ENCODE measurements at regions of chr15 and their contacts with region 1.

Region 1: GRCh38 chr15:101294731-101295606 is at the start of gene SNRPA1:
- DNase-seq: peak; percentile 97
- H3K4me3 Mint-ChIP-seq: peak within 1 kb of the TSS; percentile 92
- H3K27ac Mint-ChIP-seq: peak within 1 kb of the TSS; percentile 92
- H3K4me1 Mint-ChIP-seq: peaks cover 38% of the 10 kb centered on the region
- H3K27me3 Mint-ChIP-seq: no peaks in the 10 kb centered on the region
- total RNA-seq, gene SNRPA1: 205 to 212 TPM

Region 2: DNA sequence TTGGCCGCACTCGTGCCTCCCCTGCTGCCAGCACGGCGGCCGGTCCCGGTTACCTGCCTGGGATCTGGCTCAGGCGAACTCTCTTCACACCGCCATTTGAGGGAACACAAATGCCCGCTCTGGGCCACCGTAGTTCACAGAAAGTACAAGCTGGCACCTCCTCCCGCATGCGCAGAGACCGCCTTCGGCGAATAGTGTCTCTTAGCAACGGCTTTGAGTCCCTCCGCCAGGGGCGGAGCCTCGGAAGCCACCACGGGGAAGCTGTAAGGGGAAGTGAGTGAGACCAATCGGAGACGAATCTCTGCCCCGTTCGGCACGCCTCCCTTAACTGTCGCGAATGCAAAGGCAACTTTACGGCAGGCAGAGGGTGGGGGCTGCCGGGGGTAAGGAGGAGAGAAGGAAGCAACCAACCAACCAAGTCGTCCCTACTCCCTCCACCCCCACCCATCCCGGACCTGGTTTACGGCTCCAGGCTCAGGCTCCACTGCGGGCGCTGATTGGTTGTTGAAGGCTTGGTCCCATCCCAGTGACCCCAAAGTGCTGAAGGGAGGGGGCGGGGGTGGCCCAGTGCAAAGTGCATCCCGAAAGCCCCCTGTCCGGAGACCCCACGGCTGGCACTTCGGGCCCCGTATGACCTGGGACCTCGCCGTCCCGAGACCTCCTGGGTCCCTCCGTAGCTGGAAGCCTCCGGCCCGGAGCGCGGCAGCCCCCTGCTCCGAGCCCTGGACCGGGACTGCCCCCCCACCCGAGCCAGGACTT is 692.7 kb before region 1 on chr15 and contains the starts of genes ASB7 and LINS1:
- CTCF ChIA-PET with region 1: no interaction called
- intact Hi-C with region 1: loop called (anchors 5 kb)
- DNase-seq: peak; percentile 99
- H3K4me3 Mint-ChIP-seq: no peak within 1 kb of the TSS
- H3K27ac Mint-ChIP-seq: no peak within 1 kb of the TSS
- H3K4me1 Mint-ChIP-seq: peaks cover 56% of the 10 kb centered on the region
- H3K27me3 Mint-ChIP-seq: no peaks in the 10 kb centered on the region
- total RNA-seq, gene ASB7: 15.6 to 16.8 TPM
- total RNA-seq, gene LINS1: 36.8 to 37.1 TPM

Region 3: GRCh38 chr15:101277038-101277882 is 17.7 kb before region 1 on chr15 and contains the start of gene SELENOS:
- CTCF ChIA-PET with region 1: interaction called, 4 read pairs
- intact Hi-C with region 1: loop called (anchors 1 kb)
- DNase-seq: peak; percentile 85
- H3K4me3 Mint-ChIP-seq: peak within 1 kb of the TSS; percentile 90
- H3K27ac Mint-ChIP-seq: peak within 1 kb of the TSS; percentile 54
- H3K4me1 Mint-ChIP-seq: peaks cover 21% of the 10 kb centered on the region
- H3K27me3 Mint-ChIP-seq: no peaks in the 10 kb centered on the region
- total RNA-seq, gene SELENOS: 13.1 to 15.3 TPM

Region 4: DNA sequence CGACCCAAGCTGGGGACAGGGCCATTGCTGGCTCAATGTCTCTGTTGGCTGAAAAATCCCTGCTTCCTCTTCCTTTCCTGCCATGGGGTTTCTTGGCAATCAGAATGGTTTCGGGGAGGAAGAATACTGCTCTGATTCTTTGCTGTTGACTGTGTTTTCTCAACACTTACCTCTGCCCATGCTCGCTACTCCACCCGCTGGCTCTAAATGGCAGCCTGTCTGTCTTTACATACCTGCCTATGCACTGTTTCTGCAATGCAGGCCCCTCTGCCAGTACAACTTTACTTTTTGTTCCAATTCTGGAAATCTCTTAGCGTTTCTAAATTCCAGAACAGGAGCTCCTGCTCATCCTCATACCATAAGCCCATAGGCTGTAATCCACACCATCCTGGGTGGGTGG is 38.4 kb after region 1 on chr15:
- CTCF ChIA-PET with region 1: no interaction called
- intact Hi-C with region 1: loop called (anchors 1 kb)
- DNase-seq: no peak
- H3K4me3 Mint-ChIP-seq: no peak overlapping the region
- H3K27ac Mint-ChIP-seq: peak overlapping the region; percentile 27
- H3K4me1 Mint-ChIP-seq: peaks cover 11% of the 10 kb centered on the region
- H3K27me3 Mint-ChIP-seq: no peaks in the 10 kb centered on the region

Region 5: GRCh38 chr15:101514318-101514717 is 219.3 kb after region 1 on chr15:
- CTCF ChIA-PET with region 1: no interaction called
- intact Hi-C with region 1: no loop called
- DNase-seq: no peak
- H3K4me3 Mint-ChIP-seq: no peak overlapping the region
- H3K27ac Mint-ChIP-seq: no peak overlapping the region
- H3K4me1 Mint-ChIP-seq: no peaks in the 10 kb centered on the region
- H3K27me3 Mint-ChIP-seq: peaks cover 7% of the 10 kb centered on the region

Region 6: GRCh38 chr15:101528108-101528916 is 233.3 kb after region 1 on chr15:
- CTCF ChIA-PET with region 1: no interaction called
- intact Hi-C with region 1: no loop called
- DNase-seq: no peak
- H3K4me3 Mint-ChIP-seq: no peak overlapping the region
- H3K27ac Mint-ChIP-seq: no peak overlapping the region
- H3K4me1 Mint-ChIP-seq: no peaks in the 10 kb centered on the region
- H3K27me3 Mint-ChIP-seq: peaks cover 12% of the 10 kb centered on the region

Region 7: DNA sequence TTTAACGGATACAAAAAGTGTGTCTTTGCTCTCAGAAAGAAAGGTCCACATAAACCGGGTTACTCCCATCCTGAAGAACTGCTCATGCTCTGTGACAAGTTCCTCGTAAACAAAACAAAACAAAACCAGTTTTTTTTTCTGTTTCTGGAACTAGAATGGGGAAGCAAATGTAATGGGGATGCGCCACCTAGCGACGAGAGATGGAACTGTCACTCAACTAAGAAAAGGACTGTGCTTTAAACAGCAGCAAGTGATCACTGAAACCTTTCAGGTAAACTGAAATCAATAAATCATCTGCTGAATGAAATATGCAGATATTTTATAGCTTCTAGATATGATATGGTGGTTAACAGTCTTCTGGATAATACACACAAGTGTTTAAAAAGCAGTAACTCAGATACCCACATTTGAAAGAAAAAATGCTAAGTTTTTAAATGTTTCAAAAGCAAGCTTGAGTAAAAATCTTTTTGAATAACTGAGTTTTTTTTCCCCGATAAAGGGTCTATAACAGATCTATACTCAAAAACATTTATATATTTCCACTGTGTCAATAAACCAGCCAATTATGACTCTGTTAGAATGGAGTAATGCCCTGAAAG is 346.3 kb after region 1 on chr15:
- CTCF ChIA-PET with region 1: interaction called, 45 read pairs
- intact Hi-C with region 1: loop called (anchors 1 kb)
- DNase-seq: peak; percentile 86
- H3K4me3 Mint-ChIP-seq: no peak overlapping the region
- H3K27ac Mint-ChIP-seq: peak overlapping the region; percentile 59
- H3K4me1 Mint-ChIP-seq: peaks cover 30% of the 10 kb centered on the region
- H3K27me3 Mint-ChIP-seq: no peaks in the 10 kb centered on the region

Region 8: DNA sequence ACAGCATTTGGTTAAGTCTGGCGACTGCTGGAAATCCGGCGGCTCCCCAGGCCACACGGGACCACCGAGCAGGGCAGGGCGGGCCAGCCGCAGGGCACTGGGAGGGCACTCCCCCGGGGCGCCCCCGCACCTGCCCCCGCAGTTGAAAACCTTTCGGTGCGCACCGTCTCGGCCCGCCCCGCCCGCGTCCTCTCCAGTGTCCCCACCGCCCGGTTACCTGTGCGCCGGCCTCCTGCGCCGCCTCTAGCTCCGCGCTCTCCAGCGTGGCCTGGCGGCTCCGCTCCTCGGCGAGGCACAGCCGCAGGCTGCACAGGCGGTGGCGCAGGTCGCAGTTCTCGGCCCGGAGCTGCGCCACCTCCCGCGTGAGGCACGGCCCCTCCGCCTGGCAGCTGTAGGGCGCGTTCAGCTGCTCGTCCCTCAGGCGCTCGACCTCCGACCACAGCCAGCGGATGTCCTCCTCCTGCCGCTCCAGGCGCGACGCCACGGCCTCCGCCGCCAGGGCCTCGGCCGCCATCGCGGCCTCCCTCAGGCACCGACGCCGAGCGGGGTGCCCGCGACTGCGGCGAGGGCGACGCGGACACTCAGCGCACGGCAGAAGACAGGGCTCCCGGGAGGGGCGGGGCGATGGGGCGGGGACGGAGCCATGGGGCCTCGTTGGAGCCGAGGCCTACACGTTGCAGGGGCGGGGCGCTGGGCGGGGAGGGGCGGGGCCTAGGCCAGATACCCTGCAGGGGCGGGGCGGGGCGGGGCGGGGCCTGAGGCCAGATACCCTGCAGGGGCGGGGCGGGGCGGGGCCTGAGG is 429.1 kb after region 1 on chr15 and contains the start of gene TARS3:
- CTCF ChIA-PET with region 1: no interaction called
- intact Hi-C with region 1: loop called (anchors 10 kb)
- DNase-seq: peak; percentile 96
- H3K4me3 Mint-ChIP-seq: peak within 1 kb of the TSS; percentile 85
- H3K27ac Mint-ChIP-seq: peak within 1 kb of the TSS; percentile 72
- H3K4me1 Mint-ChIP-seq: peaks cover 11% of the 10 kb centered on the region
- H3K27me3 Mint-ChIP-seq: no peaks in the 10 kb centered on the region
- total RNA-seq, gene TARS3: 6.9 to 8.0 TPM

Measured in activated naive CD4-positive, alpha-beta T cell treated with anti-CD3 and anti-CD28 coated beads for 36 hours (primary cell).